CD4-positive, alpha-beta T cell (primary cell): ENCODE measurements at regions of chrX and their contacts with region 1.

Region 1: GRCh38 chrX:10014462-10015356 is 47.6 kb downstream of the CLDN34 start:
- DNase-seq: peak; percentile 55 to 90 (median 68)
- ATAC-seq: peak; percentile 90
- H3K4me3 ChIP-seq: peak overlapping the region; percentile 64
- H3K4me3 Mint-ChIP-seq: peak overlapping the region; percentile 58
- H3K27ac ChIP-seq: peak overlapping the region in 1 of 2 donors; percentile 13
- H3K27ac Mint-ChIP-seq: no peak overlapping the region
- H3K4me1 ChIP-seq: peaks cover 39% of the 10 kb centered on the region
- H3K4me1 Mint-ChIP-seq: peaks cover 33% of the 10 kb centered on the region
- H3K27me3 ChIP-seq: no peaks in the 10 kb centered on the region
- H3K27me3 Mint-ChIP-seq: no peaks in the 10 kb centered on the region
- CTCF ChIP-seq: no peak

Region 2: DNA sequence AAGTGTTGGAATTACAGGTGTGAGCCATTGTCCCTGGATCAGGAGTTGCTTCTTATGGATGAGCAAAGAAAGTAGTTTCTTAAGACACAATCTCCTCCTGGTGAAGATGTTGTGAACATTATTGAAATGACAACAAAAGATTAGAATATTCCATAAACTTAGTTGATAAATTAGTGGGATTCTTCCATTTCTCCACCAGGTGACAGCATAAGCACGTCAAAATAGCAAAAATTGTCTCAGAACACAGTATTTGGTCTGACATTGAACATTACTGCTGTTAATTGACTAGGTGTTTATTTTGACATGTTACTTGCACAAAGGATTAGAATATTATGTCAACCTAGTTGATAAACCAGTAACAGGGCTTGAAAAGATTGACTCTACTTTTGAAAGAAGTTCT is 25.9 kb before region 1 on chrX:
- CTCF ChIA-PET with region 1: no interaction called
- POLR2A ChIA-PET with region 1: no interaction called
- intact Hi-C with region 1: no loop called
- DNase-seq: peak in 3 of 14 experiments; percentile 33 to 41 (median 39)
- ATAC-seq: no peak
- H3K4me3 ChIP-seq: no peak overlapping the region
- H3K4me3 Mint-ChIP-seq: no peak overlapping the region
- H3K27ac ChIP-seq: no peak overlapping the region
- H3K27ac Mint-ChIP-seq: no peak overlapping the region
- H3K4me1 ChIP-seq: no peaks in the 10 kb centered on the region
- H3K4me1 Mint-ChIP-seq: no peaks in the 10 kb centered on the region
- H3K27me3 ChIP-seq: no peaks in the 10 kb centered on the region
- H3K27me3 Mint-ChIP-seq: no peaks in the 10 kb centered on the region
- CTCF ChIP-seq: no peak

Region 3: GRCh38 chrX:10052906-10053625 is 38.4 kb after region 1 on chrX:
- CTCF ChIA-PET with region 1: no interaction called
- POLR2A ChIA-PET with region 1: no interaction called
- intact Hi-C with region 1: no loop called
- DNase-seq: no peak
- ATAC-seq: no peak
- H3K4me3 ChIP-seq: no peak overlapping the region
- H3K4me3 Mint-ChIP-seq: no peak overlapping the region
- H3K27ac ChIP-seq: no peak overlapping the region
- H3K27ac Mint-ChIP-seq: no peak overlapping the region
- H3K4me1 ChIP-seq: no peaks in the 10 kb centered on the region
- H3K4me1 Mint-ChIP-seq: no peaks in the 10 kb centered on the region
- H3K27me3 ChIP-seq: no peaks in the 10 kb centered on the region
- H3K27me3 Mint-ChIP-seq: no peaks in the 10 kb centered on the region
- CTCF ChIP-seq: no peak

Region 4: GRCh38 chrX:11111038-11111851 is 1096.5 kb after region 1 on chrX and contains the start of gene HCCS:
- CTCF ChIA-PET with region 1: no interaction called
- POLR2A ChIA-PET with region 1: no interaction called
- intact Hi-C with region 1: loop called in 1 of 2 experiments (anchors 5 kb)
- DNase-seq: peak; percentile 65 to 92 (median 77)
- ATAC-seq: peak; percentile 85
- H3K4me3 ChIP-seq: peak within 1 kb of the TSS; percentile 80
- H3K4me3 Mint-ChIP-seq: peak within 1 kb of the TSS; percentile 98
- H3K27ac ChIP-seq: peak within 1 kb of the TSS; percentile 87 to 94
- H3K27ac Mint-ChIP-seq: no peak within 1 kb of the TSS
- H3K4me1 ChIP-seq: peaks cover 19% of the 10 kb centered on the region
- H3K4me1 Mint-ChIP-seq: peaks cover 12% of the 10 kb centered on the region
- H3K27me3 ChIP-seq: no peaks in the 10 kb centered on the region
- H3K27me3 Mint-ChIP-seq: no peaks in the 10 kb centered on the region
- CTCF ChIP-seq: no peak
- total RNA-seq, gene HCCS: 7.3 to 7.7 TPM